PC-9 (cell line): ENCODE measurements at regions of chr1 and their contacts with region 1.

Region 1: DNA sequence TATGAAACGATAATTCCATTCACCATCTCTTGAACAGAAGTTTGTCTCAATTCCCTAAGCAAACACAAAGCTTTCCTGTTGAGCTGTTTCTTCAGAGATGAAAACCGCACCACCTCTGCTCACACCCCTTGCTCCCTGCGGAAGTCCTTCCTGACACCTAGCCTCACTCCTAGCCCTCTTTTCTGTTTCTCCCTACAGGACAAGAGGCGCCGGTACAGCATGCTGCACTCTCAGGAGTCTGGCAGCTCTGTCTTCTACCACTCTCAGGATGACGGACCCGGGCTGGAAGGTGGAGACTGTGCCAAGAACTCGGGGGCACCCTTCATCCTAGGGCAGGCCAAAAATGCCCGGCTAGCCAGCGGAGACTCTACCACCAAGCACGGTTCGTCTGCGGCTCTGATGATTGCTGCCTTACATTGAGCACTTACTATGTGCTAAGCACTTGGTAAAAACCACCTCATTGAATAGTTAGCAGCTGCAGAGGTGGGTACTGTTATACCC is 45.5 kb downstream of the VWA5B1 start:
- DNase-seq: no peak
- H3K4me3 ChIP-seq: no peak overlapping the region
- H3K27ac ChIP-seq: no peak overlapping the region
- H3K4me1 ChIP-seq: no peaks in the 10 kb centered on the region
- H3K27me3 ChIP-seq: no peaks in the 10 kb centered on the region
- CTCF ChIP-seq: no peak

Region 2: GRCh38 chr1:20262810-20263534 is 73.2 kb before region 1 on chr1:
- CTCF ChIA-PET with region 1: no interaction called
- POLR2A ChIA-PET with region 1: no interaction called
- intact Hi-C with region 1: loop called (anchors 2 kb)
- DNase-seq: no peak
- H3K4me3 ChIP-seq: no peak overlapping the region
- H3K27ac ChIP-seq: no peak overlapping the region
- H3K4me1 ChIP-seq: peaks cover 22% of the 10 kb centered on the region
- H3K27me3 ChIP-seq: no peaks in the 10 kb centered on the region
- CTCF ChIP-seq: no peak